T-cell (primary cell): ENCODE measurements at regions of chr7 and their contacts with region 1.

Region 1: DNA sequence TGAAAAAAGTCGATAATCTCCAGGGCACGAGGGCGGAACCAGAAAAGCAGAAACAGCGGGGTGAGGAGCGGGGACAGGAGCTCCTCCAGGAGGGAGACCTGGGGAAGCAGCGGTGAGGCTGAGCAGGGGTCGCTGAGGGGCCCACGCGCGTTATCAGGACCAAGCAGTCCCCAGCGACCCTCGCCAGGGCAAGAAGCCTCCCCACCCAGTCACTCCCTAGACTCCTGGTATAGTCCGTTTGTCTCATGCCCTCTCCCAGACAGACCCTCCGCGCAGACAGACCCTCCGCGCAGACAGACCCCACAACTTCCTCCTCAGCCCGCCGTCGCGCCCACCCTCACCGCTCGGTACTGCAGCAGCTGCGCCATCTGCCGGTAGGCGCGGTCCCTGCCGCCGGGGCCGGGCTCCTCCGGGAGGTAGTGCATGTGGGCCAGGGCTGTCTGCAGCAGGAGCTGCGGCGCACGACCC is 6.3 kb downstream of the ATG9B start:
- DNase-seq: peak; percentile 43 to 87 (median 72)
- ATAC-seq: peak; percentile 56 to 76 (median 64)
- H3K4me3 ChIP-seq: peak overlapping the region; percentile 49 to 53
- H3K4me3 Mint-ChIP-seq: peak overlapping the region; percentile 77 to 84 (median 83)
- H3K27ac ChIP-seq: peak overlapping the region; percentile 41
- H3K27ac Mint-ChIP-seq: peak overlapping the region; percentile 63 to 98
- H3K4me1 ChIP-seq: peaks cover 25 to 65% of the 10 kb centered on the region in 2 experiments
- H3K4me1 Mint-ChIP-seq: peaks cover 54 to 62% (median 61%) of the 10 kb centered on the region in 3 donors
- H3K27me3 ChIP-seq: peaks cover 5 to 42% of the 10 kb centered on the region in 2 experiments
- H3K27me3 Mint-ChIP-seq: peaks cover 0 to 15% of the 10 kb centered on the region in 2 donors

Region 2: DNA sequence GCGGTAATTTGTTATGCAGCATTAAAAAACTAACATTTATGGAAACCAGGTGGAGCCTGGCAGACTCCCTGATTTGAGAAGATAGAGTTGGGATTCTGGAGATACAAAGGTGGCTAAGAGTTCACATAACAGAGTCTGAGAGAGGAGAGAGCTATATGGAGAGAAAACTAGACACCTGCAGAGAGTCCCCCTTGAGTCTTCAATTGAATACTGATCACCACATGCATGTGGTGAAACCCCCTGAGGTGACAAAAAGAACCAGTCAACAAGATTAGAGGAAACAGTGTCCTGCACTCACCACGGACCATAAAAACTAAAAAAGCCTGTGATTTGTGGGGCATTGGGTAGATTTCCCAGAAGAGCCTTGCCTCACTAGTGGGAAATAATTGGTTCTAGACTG is 322.3 kb before region 1 on chr7:
- CTCF ChIA-PET with region 1: no interaction called
- POLR2A ChIA-PET with region 1: no interaction called
- DNase-seq: no peak
- ATAC-seq: no peak
- H3K4me3 ChIP-seq: no peak overlapping the region
- H3K4me3 Mint-ChIP-seq: no peak overlapping the region
- H3K27ac ChIP-seq: no peak overlapping the region
- H3K27ac Mint-ChIP-seq: peak overlapping the region in 1 of 2 donors; percentile 40
- H3K4me1 ChIP-seq: no peaks in the 10 kb centered on the region
- H3K4me1 Mint-ChIP-seq: peaks cover 11 to 25% (median 16%) of the 10 kb centered on the region in 3 donors
- H3K27me3 ChIP-seq: no peaks in the 10 kb centered on the region
- H3K27me3 Mint-ChIP-seq: no peaks in the 10 kb centered on the region

Region 3: DNA sequence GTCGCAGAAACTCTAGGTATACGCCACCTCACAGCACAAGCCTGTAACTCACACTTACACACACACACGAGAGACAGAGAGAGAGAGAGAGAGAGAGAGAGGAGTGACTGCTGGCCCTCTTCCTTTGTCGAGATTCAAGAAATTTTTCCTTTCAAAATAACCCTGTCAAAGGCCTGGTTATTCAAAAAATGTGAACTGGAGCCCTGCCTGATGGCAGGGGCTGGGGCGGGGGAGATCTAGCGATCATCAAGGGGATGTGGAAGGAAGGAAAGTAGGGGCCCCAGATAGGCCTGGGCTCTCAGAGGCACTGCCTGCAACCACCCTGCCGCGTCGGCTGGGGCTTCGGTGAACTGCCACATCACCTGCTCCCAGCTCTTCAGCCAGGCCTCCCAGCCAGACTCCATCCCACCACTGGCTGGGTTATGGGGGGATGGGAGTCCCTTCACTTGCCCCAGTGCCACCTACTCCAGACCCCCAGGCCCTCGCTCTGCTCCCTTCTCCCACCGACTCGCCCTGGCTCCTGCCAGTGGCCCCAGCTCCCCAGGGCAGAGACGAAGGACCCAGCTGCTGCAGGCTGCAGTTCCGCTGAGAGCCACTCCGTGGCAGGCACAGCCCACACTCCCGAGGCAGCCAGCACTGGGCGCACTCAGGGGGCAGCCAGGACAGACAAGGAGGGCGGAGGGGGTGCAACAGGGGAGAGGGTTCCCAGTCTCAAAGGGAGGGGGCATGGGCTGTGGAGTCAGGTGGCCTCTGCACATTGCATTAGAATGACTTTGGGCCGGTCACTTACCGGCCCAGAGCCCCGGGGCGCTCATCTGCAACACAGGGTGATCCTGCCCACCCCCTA is 55.2 kb before region 1 on chr7:
- CTCF ChIA-PET with region 1: interaction called, 5 to 17 read pairs
- POLR2A ChIA-PET with region 1: no interaction called
- DNase-seq: peak in 33 of 35 experiments; percentile 22 to 76 (median 50)
- ATAC-seq: peak; percentile 80 to 96 (median 84)
- H3K4me3 ChIP-seq: no peak overlapping the region
- H3K4me3 Mint-ChIP-seq: peak overlapping the region in 1 of 3 donors; percentile 6
- H3K27ac ChIP-seq: no peak overlapping the region
- H3K27ac Mint-ChIP-seq: no peak overlapping the region
- H3K4me1 ChIP-seq: peaks cover 9 to 22% of the 10 kb centered on the region in 2 experiments
- H3K4me1 Mint-ChIP-seq: peaks cover 12 to 23% (median 17%) of the 10 kb centered on the region in 3 donors
- H3K27me3 ChIP-seq: peaks cover 2 to 70% of the 10 kb centered on the region in 2 experiments
- H3K27me3 Mint-ChIP-seq: peaks cover 14 to 33% of the 10 kb centered on the region in 2 donors

Region 4: DNA sequence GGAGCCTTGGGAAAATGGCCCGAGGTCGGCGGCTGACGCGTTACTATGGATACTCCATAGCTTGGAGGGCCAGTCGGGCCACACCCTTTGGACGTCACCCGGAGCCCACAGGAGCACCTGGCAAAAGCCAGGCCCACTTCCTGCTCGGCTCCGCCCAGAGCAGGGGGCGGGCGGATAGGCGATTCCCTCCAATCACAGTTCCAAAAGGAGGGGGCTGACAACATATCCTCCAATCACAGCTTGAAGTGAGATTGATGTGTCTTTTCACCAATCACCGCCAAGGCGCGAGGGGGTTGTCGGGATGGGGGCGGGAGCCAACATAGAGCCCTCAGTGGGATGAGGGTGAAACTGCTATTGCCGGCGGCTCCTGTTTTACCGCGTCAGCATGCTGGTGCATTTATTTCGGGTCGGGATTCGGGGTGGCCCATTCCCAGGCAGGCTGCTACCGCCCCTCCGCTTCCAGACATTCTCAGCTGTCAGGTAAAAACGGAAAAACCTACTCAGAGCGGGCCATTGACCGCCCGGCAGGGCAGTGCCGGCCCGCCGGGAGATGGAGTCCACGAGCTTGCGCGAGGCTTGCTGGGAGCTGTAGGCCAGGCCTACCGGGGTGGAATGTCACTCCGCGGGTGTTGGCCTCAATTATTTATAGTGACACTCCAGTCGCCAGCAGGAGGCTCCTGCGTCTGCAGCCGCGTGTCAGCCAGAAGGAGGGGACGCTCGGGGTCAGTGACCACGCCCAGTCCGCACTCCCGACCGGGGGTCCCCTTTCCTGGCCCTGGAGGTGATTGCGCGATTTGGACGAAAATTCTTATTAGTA is 10.4 kb after region 1 on chr7 and contains the start of gene ABCB8:
- CTCF ChIA-PET with region 1: interaction called, 3 to 19 read pairs
- POLR2A ChIA-PET with region 1: interaction called, 3 to 11 read pairs
- DNase-seq: peak; percentile 89 to 99 (median 97)
- ATAC-seq: peak; percentile 88 to 94 (median 92)
- H3K4me3 ChIP-seq: peak within 1 kb of the TSS; percentile 61 to 95
- H3K4me3 Mint-ChIP-seq: peak within 1 kb of the TSS; percentile 87 to 93 (median 91)
- H3K27ac ChIP-seq: peak within 1 kb of the TSS; percentile 88
- H3K27ac Mint-ChIP-seq: peak within 1 kb of the TSS; percentile 98
- H3K4me1 ChIP-seq: peaks cover 9 to 23% of the 10 kb centered on the region in 2 experiments
- H3K4me1 Mint-ChIP-seq: peaks cover 21 to 38% (median 36%) of the 10 kb centered on the region in 3 donors
- H3K27me3 ChIP-seq: peaks cover 0 to 9% of the 10 kb centered on the region in 2 experiments
- H3K27me3 Mint-ChIP-seq: no peaks in the 10 kb centered on the region
- total RNA-seq, gene ABCB8: 72.4 to 83.0 (median 74.8) TPM